Transverse colon (tissue), 4 donors: ENCODE measurements at regions of chr5 and their contacts with region 1.

Region 1: GRCh38 chr5:133111299-133111698 is 59.5 kb downstream of the HSPA4 start:
- DNase-seq: peak; percentile 86
- H3K4me3 ChIP-seq: no peak overlapping the region
- H3K27ac ChIP-seq: no peak overlapping the region
- H3K4me1 ChIP-seq: peaks cover 0 to 3% (median 3%) of the 10 kb centered on the region in 4 donors
- H3K27me3 ChIP-seq: no peaks in the 10 kb centered on the region
- CTCF ChIP-seq: peak; percentile 88 to 93 (median 88)
- EP300 ChIP-seq: no peak
- POLR2A ChIP-seq: no peak

Region 2: GRCh38 chr5:133240425-133241091 is 129.3 kb after region 1 on chr5:
- in situ Hi-C with region 1: no loop called
- intact Hi-C with region 1: loop called (anchors 10 kb)
- DNase-seq: no peak
- H3K4me3 ChIP-seq: no peak overlapping the region
- H3K27ac ChIP-seq: no peak overlapping the region
- H3K4me1 ChIP-seq: peaks cover 0 to 2% (median 0%) of the 10 kb centered on the region in 4 donors
- H3K27me3 ChIP-seq: no peaks in the 10 kb centered on the region
- CTCF ChIP-seq: no peak
- EP300 ChIP-seq: no peak
- POLR2A ChIP-seq: no peak

Region 3: GRCh38 chr5:133287500-133287899 is 176.2 kb after region 1 on chr5:
- in situ Hi-C with region 1: loop called in 3 of 4 experiments (anchors 25 kb)
- intact Hi-C with region 1: no loop called
- DNase-seq: peak; percentile 61
- H3K4me3 ChIP-seq: no peak overlapping the region
- H3K27ac ChIP-seq: no peak overlapping the region
- H3K4me1 ChIP-seq: peaks cover 0 to 6% (median 0%) of the 10 kb centered on the region in 4 donors
- H3K27me3 ChIP-seq: no peaks in the 10 kb centered on the region
- CTCF ChIP-seq: peak; percentile 13 to 57 (median 44)
- EP300 ChIP-seq: no peak
- POLR2A ChIP-seq: no peak

Region 4: DNA sequence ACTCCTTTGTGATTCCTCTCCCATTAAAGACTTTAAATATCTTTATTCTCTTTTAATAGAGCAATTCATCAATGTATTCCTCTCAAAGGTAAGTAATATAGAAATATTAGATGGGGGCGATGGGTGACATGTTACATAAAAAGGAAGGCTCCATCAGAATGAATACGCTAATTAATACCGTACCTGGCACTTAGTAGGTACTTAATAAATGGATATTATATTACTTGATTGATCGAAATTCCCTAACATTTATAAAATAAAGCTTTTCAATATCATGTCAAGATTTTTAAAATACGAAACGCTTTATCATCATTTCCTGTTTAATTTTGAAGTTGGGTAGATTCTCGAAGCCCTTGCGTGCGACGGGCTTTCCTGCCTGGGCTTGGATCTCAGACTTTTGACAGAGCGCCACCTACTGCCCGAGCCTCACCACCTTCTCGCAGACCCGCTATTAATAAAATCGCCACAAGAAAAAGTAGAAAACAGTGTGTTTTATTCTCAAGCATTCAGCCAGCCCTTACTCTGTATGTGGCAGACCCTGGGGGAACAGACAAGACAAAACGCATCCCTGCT is 757.7 kb after region 1 on chr5:
- in situ Hi-C with region 1: loop called in 1 of 4 experiments (anchors 25 kb)
- intact Hi-C with region 1: loop called (anchors 10 kb)
- DNase-seq: peak; percentile 69
- H3K4me3 ChIP-seq: no peak overlapping the region
- H3K27ac ChIP-seq: no peak overlapping the region
- H3K4me1 ChIP-seq: no peaks in the 10 kb centered on the region
- H3K27me3 ChIP-seq: peaks cover 3% of the 10 kb centered on the region
- CTCF ChIP-seq: peak; percentile 63 to 72 (median 70)
- EP300 ChIP-seq: no peak
- POLR2A ChIP-seq: no peak